ENCODE measurements at regions of chr13 and their contacts with region 1.

Region 1: GRCh38 chr13:94335761-94336526 is 143.5 kb downstream of the DCT start:
- DNase-seq: peak; percentile 49
- ATAC-seq: peak; percentile 61; the same call in 1 of the 2 replicates
- H3K4me3 ChIP-seq: no peak overlapping the region
- H3K27ac ChIP-seq: no peak overlapping the region
- H3K4me1 ChIP-seq: peaks cover 5% of the 10 kb centered on the region; the same call in 1 of the 2 replicates
- H3K27me3 ChIP-seq: no peaks in the 10 kb centered on the region
- CTCF ChIP-seq: no peak

Region 2: GRCh38 chr13:94192431-94192975 is 143.4 kb before region 1 on chr13:
- CTCF ChIA-PET with region 1: no interaction called
- POLR2A ChIA-PET with region 1: no interaction called
- intact Hi-C with region 1: loop called (anchors 5 kb)
- DNase-seq: peak; percentile 53
- ATAC-seq: peak; percentile 59
- H3K4me3 ChIP-seq: no peak overlapping the region
- H3K27ac ChIP-seq: no peak overlapping the region
- H3K4me1 ChIP-seq: no peaks in the 10 kb centered on the region
- H3K27me3 ChIP-seq: no peaks in the 10 kb centered on the region
- CTCF ChIP-seq: peak; percentile 69

Measured in PC-3 (cell line).